ENCODE measurements at regions of chr7 and their contacts with region 1.

Region 1: DNA sequence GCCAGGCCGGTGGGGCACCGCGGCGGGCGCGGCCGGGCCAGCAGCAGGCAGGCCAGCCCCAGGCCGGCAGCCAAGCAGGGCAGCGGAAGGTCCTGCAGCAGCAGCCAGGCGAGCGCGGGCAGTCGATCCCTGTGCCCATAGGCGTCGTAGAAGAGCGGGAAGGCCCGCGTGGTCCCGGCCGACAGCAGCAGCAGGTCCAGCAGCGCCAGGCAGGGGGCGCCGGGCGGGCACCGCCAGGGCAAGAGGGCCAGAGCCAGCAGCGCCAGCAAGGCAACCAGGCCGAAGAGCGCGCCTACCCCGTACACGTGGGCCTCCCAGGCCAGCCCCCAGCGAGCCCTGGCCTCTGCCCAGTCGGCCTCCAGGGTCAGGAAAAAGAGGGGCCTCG is 8.4 kb upstream of the RBM28 start:
- DNase-seq: peak in 8 of 14 experiments; percentile 9 to 63 (median 34)
- ATAC-seq: peak; percentile 45
- H3K4me3 ChIP-seq: no peak overlapping the region
- H3K4me3 Mint-ChIP-seq: no peak overlapping the region
- H3K27ac ChIP-seq: no peak overlapping the region
- H3K27ac Mint-ChIP-seq: no peak overlapping the region
- H3K4me1 ChIP-seq: peaks cover 14% of the 10 kb centered on the region
- H3K4me1 Mint-ChIP-seq: peaks cover 6% of the 10 kb centered on the region
- H3K27me3 ChIP-seq: peaks cover 17 to 29% of the 10 kb centered on the region in 2 experiments
- H3K27me3 Mint-ChIP-seq: peaks cover 44% of the 10 kb centered on the region
- CTCF ChIP-seq: peak; percentile 24

Region 2: DNA sequence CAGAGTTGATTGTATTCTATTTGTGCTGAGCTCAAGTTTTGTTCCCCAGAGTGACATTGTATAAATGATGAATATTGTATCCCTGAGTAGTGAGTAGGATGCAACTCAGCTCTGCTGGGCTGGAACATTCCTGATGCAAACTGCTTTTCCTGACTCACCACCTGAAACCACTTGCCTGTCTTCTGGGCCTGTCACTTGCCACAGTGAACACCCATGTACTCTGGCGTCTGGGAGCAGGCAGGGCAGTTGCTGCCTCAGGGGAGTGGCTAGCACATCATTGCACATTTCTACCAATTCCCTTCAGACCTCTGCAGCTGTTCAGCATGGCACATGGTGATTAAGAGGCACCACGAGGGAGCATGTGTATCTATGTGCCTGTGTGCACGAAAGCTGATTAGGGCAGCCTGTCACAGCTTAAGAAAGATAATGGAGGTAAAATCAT is 542.9 kb before region 1 on chr7:
- CTCF ChIA-PET with region 1: no interaction called
- POLR2A ChIA-PET with region 1: no interaction called
- intact Hi-C with region 1: no loop called
- DNase-seq: no peak
- ATAC-seq: no peak
- H3K4me3 ChIP-seq: no peak overlapping the region
- H3K4me3 Mint-ChIP-seq: no peak overlapping the region
- H3K27ac ChIP-seq: no peak overlapping the region
- H3K27ac Mint-ChIP-seq: no peak overlapping the region
- H3K4me1 ChIP-seq: no peaks in the 10 kb centered on the region
- H3K4me1 Mint-ChIP-seq: peaks cover 26% of the 10 kb centered on the region
- H3K27me3 ChIP-seq: no peaks in the 10 kb centered on the region
- H3K27me3 Mint-ChIP-seq: no peaks in the 10 kb centered on the region
- CTCF ChIP-seq: no peak

Region 3: DNA sequence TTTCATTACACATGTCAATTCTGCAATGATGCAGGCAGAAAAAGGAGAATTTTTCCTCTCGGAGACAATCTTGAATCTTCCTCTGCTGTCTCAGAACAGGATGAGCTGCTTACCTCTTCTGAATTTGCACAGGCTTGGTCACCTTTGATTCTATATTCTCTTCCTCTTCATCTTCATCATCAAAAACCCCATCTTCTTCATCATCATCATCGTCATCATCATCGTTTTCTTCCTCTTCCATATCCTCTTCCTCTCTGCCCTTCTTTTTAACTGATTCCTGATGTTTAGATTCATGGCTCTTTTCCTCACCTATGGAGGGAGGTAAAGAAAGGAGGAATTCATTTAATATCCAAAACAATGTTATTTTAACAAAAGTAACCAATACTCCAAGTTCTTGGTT is 16.4 kb before region 1 on chr7:
- CTCF ChIA-PET with region 1: no interaction called
- POLR2A ChIA-PET with region 1: no interaction called
- intact Hi-C with region 1: no loop called
- DNase-seq: no peak
- ATAC-seq: no peak
- H3K4me3 ChIP-seq: no peak overlapping the region
- H3K4me3 Mint-ChIP-seq: no peak overlapping the region
- H3K27ac ChIP-seq: no peak overlapping the region
- H3K27ac Mint-ChIP-seq: peak overlapping the region; percentile 47
- H3K4me1 ChIP-seq: no peaks in the 10 kb centered on the region
- H3K4me1 Mint-ChIP-seq: peaks cover 20% of the 10 kb centered on the region
- H3K27me3 ChIP-seq: no peaks in the 10 kb centered on the region
- H3K27me3 Mint-ChIP-seq: no peaks in the 10 kb centered on the region
- CTCF ChIP-seq: no peak

Region 4: DNA sequence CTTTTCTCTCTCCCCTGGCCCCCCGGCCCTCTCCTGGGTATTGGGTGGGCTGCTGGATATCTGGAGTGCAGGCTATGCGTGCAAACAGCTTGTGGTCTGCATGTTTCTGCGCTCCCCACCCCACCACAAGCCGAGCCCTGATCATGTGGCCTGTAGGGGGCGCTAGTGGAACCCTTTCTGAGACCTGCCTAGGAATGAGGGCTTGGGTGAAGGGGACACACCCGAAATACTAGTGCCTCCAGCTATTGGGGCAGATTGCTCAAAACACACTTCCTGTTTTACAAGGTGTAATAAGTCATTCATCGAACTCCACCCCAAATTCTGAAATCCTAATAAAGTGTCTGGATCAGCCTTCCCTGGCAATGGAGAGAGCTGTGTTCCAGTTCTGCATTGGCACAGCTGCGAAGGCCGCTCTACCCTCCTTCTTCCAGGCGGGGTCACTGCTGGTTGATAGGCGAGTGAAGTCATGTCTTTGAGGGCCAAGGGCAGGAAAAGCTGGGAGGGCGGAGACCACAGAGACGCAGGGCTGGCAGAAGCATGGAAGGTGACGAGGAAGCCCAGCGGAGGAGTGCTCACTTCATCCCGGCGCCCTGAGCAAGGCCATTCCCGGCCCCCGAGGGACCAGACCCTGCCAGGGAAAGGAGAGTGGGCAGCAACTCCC is 29.1 kb after region 1 on chr7:
- CTCF ChIA-PET with region 1: interaction called, 35 read pairs
- POLR2A ChIA-PET with region 1: interaction called, 3 read pairs
- intact Hi-C with region 1: loop called in 1 of 2 experiments (anchors 1 kb)
- DNase-seq: peak in 8 of 14 experiments; percentile 12 to 54 (median 24)
- ATAC-seq: no peak
- H3K4me3 ChIP-seq: no peak overlapping the region
- H3K4me3 Mint-ChIP-seq: no peak overlapping the region
- H3K27ac ChIP-seq: no peak overlapping the region
- H3K27ac Mint-ChIP-seq: no peak overlapping the region
- H3K4me1 ChIP-seq: peaks cover 5% of the 10 kb centered on the region
- H3K4me1 Mint-ChIP-seq: no peaks in the 10 kb centered on the region
- H3K27me3 ChIP-seq: no peaks in the 10 kb centered on the region
- H3K27me3 Mint-ChIP-seq: no peaks in the 10 kb centered on the region
- CTCF ChIP-seq: peak; percentile 46

Region 5: DNA sequence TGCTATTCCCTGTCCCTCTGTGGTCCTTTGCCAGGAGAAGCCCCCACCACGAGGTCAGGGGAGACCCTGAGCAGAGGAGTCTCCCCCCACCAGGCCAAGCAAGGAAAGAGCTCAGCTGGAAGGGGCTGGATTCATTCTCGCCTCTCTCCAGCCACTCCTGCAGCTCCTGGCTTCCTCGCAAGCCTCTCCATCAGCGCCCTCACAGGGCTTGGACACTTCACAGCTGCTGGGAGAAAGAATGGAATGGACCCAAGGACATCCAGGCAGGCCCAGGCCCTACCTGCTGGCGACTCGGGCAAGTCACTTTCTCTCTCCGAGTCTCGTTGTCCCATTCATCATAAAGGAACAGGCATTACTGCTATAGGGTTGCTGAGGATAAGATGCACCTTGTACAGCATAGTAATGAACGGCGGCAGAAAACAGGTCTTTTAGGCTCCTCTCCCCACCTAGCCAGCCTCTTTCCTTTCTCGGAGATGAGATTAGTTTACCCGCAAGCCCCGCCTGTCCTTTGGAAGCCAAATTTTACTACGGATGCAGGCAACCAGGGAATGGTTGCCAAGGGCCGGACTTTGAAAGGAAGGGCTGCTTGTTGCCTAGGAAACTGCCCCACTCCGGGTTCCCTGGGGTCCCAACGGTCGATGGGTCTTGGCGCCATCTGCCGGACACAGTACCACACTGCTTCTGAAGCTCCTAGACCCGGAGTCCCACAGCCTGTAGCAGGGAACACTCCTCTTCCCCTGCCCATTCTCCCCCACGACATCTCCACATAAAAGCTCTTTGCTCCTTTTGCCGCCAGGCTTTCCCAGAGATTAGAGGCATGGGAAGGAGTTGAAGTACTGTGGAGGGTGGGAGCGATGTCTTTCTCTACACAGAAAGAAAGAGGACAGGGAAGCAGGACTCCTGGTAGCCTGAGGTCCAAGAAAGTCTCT is 35.3 kb after region 1 on chr7:
- CTCF ChIA-PET with region 1: interaction called, 35 read pairs
- POLR2A ChIA-PET with region 1: interaction called, 14 read pairs
- intact Hi-C with region 1: loop called (anchors 1 kb)
- DNase-seq: peak; percentile 42 to 80 (median 58)
- ATAC-seq: peak; percentile 93
- H3K4me3 ChIP-seq: no peak overlapping the region
- H3K4me3 Mint-ChIP-seq: no peak overlapping the region
- H3K27ac ChIP-seq: no peak overlapping the region
- H3K27ac Mint-ChIP-seq: no peak overlapping the region
- H3K4me1 ChIP-seq: peaks cover 5% of the 10 kb centered on the region
- H3K4me1 Mint-ChIP-seq: no peaks in the 10 kb centered on the region
- H3K27me3 ChIP-seq: peaks cover 0 to 5% of the 10 kb centered on the region in 2 experiments
- H3K27me3 Mint-ChIP-seq: no peaks in the 10 kb centered on the region
- CTCF ChIP-seq: peak; percentile 82

Region 6: DNA sequence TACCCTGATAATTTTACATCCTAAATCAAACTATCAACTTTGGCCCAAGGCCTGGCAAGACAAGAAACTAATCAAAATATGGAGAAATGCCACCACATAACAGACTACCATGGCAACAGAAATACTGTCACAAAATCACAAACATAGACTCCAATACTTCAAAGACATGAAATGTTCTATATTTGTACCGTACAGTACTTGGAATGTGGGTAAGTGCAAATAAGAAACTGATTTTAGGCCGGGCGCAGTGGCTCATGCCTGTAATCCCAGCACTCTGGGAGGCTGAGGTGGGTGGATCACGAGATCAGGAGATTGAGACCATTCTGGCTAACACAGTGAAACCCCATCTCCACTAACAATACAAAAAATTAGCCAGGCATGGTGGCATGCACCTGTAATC is 693.5 kb after region 1 on chr7:
- CTCF ChIA-PET with region 1: no interaction called
- POLR2A ChIA-PET with region 1: no interaction called
- intact Hi-C with region 1: loop called (anchors 5 to 10 kb)
- DNase-seq: no peak
- ATAC-seq: no peak
- H3K4me3 ChIP-seq: no peak overlapping the region
- H3K4me3 Mint-ChIP-seq: peak overlapping the region; percentile 36
- H3K27ac ChIP-seq: no peak overlapping the region
- H3K27ac Mint-ChIP-seq: peak overlapping the region; percentile 28
- H3K4me1 ChIP-seq: peaks cover 30% of the 10 kb centered on the region
- H3K4me1 Mint-ChIP-seq: peaks cover 94% of the 10 kb centered on the region
- H3K27me3 ChIP-seq: no peaks in the 10 kb centered on the region
- H3K27me3 Mint-ChIP-seq: no peaks in the 10 kb centered on the region
- CTCF ChIP-seq: no peak